ENCODE measurements at regions of chr17 and their contacts with region 1.

Region 1: DNA sequence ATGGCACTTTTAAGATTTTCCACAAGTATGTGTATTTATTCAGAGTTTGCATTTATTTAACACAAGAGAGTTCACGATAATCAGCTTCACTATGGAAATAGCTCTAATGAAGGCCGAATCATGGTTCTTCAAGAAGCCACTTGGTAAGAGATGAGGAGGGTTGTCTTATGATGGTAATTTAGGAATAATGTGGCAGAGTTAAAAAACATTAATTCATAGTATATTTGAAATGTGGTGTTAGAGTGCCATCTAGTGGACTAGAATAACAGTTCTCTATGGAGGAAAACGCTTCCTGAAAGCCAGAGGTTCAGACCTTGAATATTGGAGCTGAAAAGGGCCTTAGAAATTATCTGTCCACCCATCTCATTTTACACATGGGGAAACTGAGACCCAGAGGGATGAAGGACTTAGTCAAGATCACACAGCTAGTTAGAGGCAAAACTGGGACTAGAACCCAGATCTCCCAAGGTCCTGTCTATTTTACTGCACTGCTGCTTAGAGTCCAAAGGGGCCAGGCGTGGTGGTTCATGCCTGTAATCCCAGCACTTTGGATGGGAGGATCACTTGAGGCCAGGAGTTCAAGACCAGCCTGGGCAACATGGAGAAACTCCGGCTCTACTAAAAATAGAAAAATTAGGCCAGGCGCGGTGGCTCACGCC is 33.8 kb upstream of the KPNB1 start:
- DNase-seq: peak; percentile 55 to 72 (median 63)
- H3K4me3 ChIP-seq: no peak overlapping the region
- H3K27ac ChIP-seq: no peak overlapping the region
- H3K4me1 ChIP-seq: no peaks in the 10 kb centered on the region
- H3K27me3 ChIP-seq: no peaks in the 10 kb centered on the region

Region 2: GRCh38 chr17:47633996-47634395 is 18.1 kb after region 1 on chr17:
- CTCF ChIA-PET with region 1: interaction called, 14 read pairs
- POLR2A ChIA-PET with region 1: interaction called, 3 read pairs
- DNase-seq: no peak
- H3K4me3 ChIP-seq: no peak overlapping the region
- H3K27ac ChIP-seq: no peak overlapping the region
- H3K4me1 ChIP-seq: peaks cover 0 to 5% (median 4%) of the 10 kb centered on the region in 4 experiments
- H3K27me3 ChIP-seq: no peaks in the 10 kb centered on the region

Measured in common myeloid progenitor, CD34-positive (primary cell).